ENCODE measurements at regions of chr3 and their contacts with region 1.

Region 1: DNA sequence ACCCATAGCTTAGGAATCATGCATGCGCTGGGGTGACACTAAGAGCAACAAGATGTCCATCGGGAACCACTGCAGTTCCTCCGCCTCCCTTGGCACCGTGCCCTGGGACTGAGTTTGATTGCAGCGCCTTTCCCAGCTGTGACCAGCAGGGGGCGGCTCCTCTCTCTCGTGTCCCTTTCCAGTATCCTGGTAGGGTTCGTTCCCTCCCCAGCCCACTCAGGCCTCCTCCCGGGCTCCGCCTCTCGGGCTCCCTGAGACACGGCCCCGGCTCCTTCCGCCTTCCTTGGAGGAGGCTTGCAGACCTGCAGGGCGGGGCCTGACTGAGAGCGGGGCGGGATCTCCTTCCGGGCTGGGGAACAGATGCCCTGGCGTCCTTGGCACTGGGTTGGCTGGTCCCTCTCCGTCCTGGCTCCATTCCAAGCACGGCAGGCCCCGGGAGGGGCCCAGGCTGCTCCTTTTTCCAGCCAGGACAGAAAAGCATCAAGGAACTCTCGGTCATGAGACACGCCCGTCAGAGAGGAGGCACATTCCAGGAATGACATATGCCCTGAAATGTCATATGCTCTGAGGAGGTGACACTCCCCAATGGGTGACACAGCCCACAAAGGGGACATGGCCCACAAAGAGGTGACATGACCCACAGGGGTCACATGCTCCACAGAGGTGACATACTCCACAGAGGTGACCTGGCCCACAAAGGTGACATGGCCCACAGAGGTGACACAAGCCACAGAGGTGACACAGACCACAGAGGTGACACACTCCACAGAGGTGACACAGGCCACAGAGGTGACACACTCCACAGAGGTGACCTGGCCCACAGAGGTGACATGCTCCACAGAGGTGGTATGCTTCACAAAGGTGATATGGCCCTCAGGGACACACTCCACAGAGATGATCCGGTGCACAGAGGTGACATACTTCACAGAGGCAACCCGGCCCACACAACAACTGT is 79.0 kb downstream of the ABHD5 start:
- DNase-seq: peak; percentile 96 to 97
- ATAC-seq: peak; percentile 91 to 95 (median 94)
- H3K4me3 ChIP-seq: peak overlapping the region in 8 of 10 donors; percentile 1 to 49 (median 42)
- H3K27ac ChIP-seq: peak overlapping the region; percentile 66 to 94 (median 82)
- H3K4me1 ChIP-seq: peaks cover 11 to 52% (median 30%) of the 10 kb centered on the region in 9 donors
- H3K27me3 ChIP-seq: no peaks in the 10 kb centered on the region
- CTCF ChIP-seq: peak; percentile 86 to 99 (median 96)

Region 2: GRCh38 chr3:43540624-43541023 is 229.1 kb before region 1 on chr3:
- intact Hi-C with region 1: loop called in 4 of 10 experiments (anchors 10 kb)
- DNase-seq: no peak
- ATAC-seq: no peak
- H3K4me3 ChIP-seq: no peak overlapping the region
- H3K27ac ChIP-seq: no peak overlapping the region
- H3K4me1 ChIP-seq: no peaks in the 10 kb centered on the region
- H3K27me3 ChIP-seq: no peaks in the 10 kb centered on the region
- CTCF ChIP-seq: no peak

Region 3: GRCh38 chr3:43621656-43622432 is 147.9 kb before region 1 on chr3 and contains the start of gene ANO10:
- intact Hi-C with region 1: loop called in 1 of 10 experiments (anchors 10 kb)
- DNase-seq: peak; percentile 99
- ATAC-seq: peak; percentile 98 to 100 (median 99)
- H3K4me3 ChIP-seq: peak within 1 kb of the TSS; percentile 64 to 97 (median 88)
- H3K27ac ChIP-seq: peak within 1 kb of the TSS; percentile 14 to 90 (median 82)
- H3K4me1 ChIP-seq: peaks cover 0 to 19% (median 12%) of the 10 kb centered on the region in 9 donors
- H3K27me3 ChIP-seq: no peaks in the 10 kb centered on the region
- CTCF ChIP-seq: no peak
- total RNA-seq, gene ANO10: 7.1 to 24.2 (median 13.3) TPM

Region 4: GRCh38 chr3:43690400-43691119 is 79.2 kb before region 1 on chr3 and contains the start of gene ABHD5:
- intact Hi-C with region 1: loop called in 1 of 10 experiments (anchors 5 kb)
- DNase-seq: peak; percentile 87 to 94
- ATAC-seq: peak; percentile 97 to 99 (median 98)
- H3K4me3 ChIP-seq: peak within 1 kb of the TSS; percentile 52 to 99 (median 88)
- H3K27ac ChIP-seq: peak within 1 kb of the TSS; percentile 65 to 97 (median 94)
- H3K4me1 ChIP-seq: peaks cover 2 to 43% (median 19%) of the 10 kb centered on the region in 9 donors
- H3K27me3 ChIP-seq: no peaks in the 10 kb centered on the region
- CTCF ChIP-seq: peak in 4 of 9 donors; percentile 28 to 44 (median 30)
- total RNA-seq, gene ABHD5: 23.0 to 30.9 (median 28.0) TPM

Region 5: GRCh38 chr3:44198284-44199269 is 428.8 kb after region 1 on chr3:
- intact Hi-C with region 1: loop called in 4 of 10 experiments (anchors 1 to 10 kb)
- DNase-seq: peak; percentile 18 to 78
- ATAC-seq: peak in 6 of 8 donors; percentile 73 to 82 (median 80)
- H3K4me3 ChIP-seq: no peak overlapping the region
- H3K27ac ChIP-seq: no peak overlapping the region
- H3K4me1 ChIP-seq: no peaks in the 10 kb centered on the region
- H3K27me3 ChIP-seq: peaks cover 0 to 42% (median 10%) of the 10 kb centered on the region in 7 donors
- CTCF ChIP-seq: peak; percentile 60 to 86 (median 82)

Measured in heart right ventricle (tissue), 16 donors.